ENCODE measurements at regions of chr17 and their contacts with region 1.

Region 1: DNA sequence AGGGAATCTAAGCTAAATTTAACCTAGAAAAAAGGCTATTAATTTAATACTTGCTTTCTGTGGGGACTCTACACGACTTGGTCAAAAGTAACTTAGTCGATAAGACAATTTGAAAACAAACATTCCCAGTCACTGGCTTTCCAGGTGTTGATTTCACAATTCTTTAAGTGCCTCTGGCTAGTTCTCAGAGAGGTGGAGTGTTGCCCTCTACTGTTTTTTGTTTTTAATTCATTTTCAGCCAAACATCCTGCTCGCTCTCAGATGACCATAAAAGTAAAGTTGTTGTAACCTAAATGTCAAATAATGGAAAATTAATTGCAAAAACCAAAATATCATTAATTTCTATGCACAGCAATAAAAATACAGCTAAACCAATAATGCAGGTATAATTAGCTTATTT is 107.1 kb downstream of the MYO1D start:
- DNase-seq: no peak
- ATAC-seq: peak; percentile 58 to 78 (median 72)
- H3K4me3 ChIP-seq: no peak overlapping the region
- H3K27ac ChIP-seq: no peak overlapping the region
- H3K4me1 ChIP-seq: no peaks in the 10 kb centered on the region
- H3K27me3 ChIP-seq: no peaks in the 10 kb centered on the region
- CTCF ChIP-seq: peak; percentile 4 to 43 (median 25)
- POLR2A ChIP-seq: no peak

Region 2: DNA sequence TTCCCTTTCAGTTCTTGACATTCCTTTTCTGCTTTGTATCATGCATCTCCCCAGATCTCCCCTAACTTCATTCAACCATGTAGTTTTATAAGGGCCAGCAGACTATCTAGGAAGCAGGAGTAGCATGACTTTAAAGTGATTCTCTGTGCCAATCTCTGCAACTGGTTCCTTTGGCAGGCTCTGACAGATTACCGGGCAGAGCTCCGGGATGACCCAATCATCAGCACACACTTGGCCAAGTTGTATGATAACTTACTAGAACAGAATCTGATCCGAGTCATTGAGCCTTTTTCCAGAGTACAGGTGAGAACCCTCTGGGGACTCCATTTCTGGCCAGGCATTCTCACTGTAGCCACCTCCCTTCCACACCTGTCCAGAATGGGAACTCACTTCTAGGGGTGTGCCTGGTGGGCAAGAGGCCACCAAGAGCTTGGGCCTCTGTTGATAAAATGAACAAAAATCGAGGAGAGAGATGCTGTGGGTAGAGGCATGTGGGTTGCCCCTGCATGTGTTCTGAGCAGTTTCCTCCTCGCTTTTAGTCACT is 290.7 kb before region 1 on chr17:
- intact Hi-C with region 1: loop called in 1 of 2 experiments (anchors 10 kb)
- DNase-seq: peak in 1 of 3 donors; percentile 56
- ATAC-seq: peak in 2 of 4 donors; percentile 56 to 78
- H3K4me3 ChIP-seq: no peak overlapping the region
- H3K27ac ChIP-seq: no peak overlapping the region
- H3K4me1 ChIP-seq: peaks cover 0 to 3% (median 0%) of the 10 kb centered on the region in 4 donors
- H3K27me3 ChIP-seq: no peaks in the 10 kb centered on the region
- CTCF ChIP-seq: no peak
- POLR2A ChIP-seq: no peak

Measured in right lobe of liver (tissue), 6 donors.